CD4-positive, alpha-beta T cell (primary cell): ENCODE measurements at regions of chr18 and their contacts with region 1.

Region 1: DNA sequence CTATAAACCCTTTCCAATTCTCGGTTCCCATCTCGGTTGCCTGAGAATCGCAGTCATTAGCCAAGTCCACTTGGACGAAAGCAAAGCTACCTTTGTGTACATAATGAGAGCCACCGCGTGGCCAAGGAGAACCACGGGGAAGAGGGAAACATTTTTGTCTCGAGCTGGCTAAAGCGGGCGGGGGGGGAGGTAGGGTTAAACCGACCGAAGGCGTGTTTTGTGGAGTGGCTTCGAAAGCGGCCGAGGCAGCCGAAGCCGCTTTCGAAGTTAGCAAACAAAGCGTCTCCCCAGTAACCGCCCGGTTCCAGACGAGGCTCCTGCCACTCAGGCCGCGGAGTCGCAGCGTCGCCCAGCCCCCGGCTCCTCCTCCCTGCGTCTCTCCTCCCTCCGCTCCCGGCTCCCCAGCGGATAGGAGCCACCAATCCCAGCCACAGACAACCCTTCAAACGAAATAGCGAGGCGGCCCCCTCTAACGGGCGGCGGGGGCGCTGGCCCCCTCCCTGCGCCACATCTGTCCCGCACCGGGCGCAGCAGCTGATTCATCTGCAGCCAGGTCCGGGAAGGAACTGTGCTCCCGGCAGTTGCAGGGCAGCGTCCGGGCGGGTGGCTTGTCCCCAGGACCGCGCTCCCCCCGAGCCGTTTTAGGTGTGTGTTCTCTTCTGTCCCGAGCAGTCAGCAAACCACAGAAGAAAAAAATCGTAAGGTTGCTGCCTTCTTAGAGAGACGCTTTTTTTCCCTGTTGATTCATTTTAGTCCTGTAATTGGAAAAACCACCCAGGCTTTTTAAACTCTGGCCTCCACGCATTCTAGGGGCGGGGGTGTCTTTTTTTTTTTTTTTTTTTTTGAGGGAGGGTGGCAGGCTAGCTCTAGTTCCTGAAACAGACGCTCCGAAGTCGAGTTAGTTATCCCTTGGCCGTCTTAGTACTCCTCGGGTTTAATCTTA is 1.8 kb upstream of the TGIF1 start:
- DNase-seq: peak; percentile 74 to 95 (median 84)
- ATAC-seq: peak; percentile 52
- H3K4me3 ChIP-seq: peak overlapping the region; percentile 90
- H3K4me3 Mint-ChIP-seq: peak overlapping the region; percentile 95
- H3K27ac ChIP-seq: peak overlapping the region; percentile 94 to 98
- H3K27ac Mint-ChIP-seq: peak overlapping the region; percentile 99
- H3K4me1 ChIP-seq: peaks cover 48% of the 10 kb centered on the region
- H3K4me1 Mint-ChIP-seq: peaks cover 47% of the 10 kb centered on the region
- H3K27me3 ChIP-seq: no peaks in the 10 kb centered on the region
- H3K27me3 Mint-ChIP-seq: peaks cover 5% of the 10 kb centered on the region
- CTCF ChIP-seq: no peak

Region 2: GRCh38 chr18:2655178-2655953 is 792.8 kb before region 1 on chr18 and contains the start of gene SMCHD1:
- CTCF ChIA-PET with region 1: no interaction called
- POLR2A ChIA-PET with region 1: interaction called, 5 read pairs
- intact Hi-C with region 1: loop called in 1 of 2 experiments (anchors 5 kb)
- DNase-seq: peak; percentile 73 to 96 (median 87)
- ATAC-seq: peak; percentile 67
- H3K4me3 ChIP-seq: peak within 1 kb of the TSS; percentile 97
- H3K4me3 Mint-ChIP-seq: peak within 1 kb of the TSS; percentile 97
- H3K27ac ChIP-seq: peak within 1 kb of the TSS; percentile 99
- H3K27ac Mint-ChIP-seq: peak within 1 kb of the TSS; percentile 89
- H3K4me1 ChIP-seq: peaks cover 25% of the 10 kb centered on the region
- H3K4me1 Mint-ChIP-seq: peaks cover 55% of the 10 kb centered on the region
- H3K27me3 ChIP-seq: no peaks in the 10 kb centered on the region
- H3K27me3 Mint-ChIP-seq: no peaks in the 10 kb centered on the region
- CTCF ChIP-seq: no peak
- total RNA-seq, gene SMCHD1: 357 to 359 TPM

Region 3: DNA sequence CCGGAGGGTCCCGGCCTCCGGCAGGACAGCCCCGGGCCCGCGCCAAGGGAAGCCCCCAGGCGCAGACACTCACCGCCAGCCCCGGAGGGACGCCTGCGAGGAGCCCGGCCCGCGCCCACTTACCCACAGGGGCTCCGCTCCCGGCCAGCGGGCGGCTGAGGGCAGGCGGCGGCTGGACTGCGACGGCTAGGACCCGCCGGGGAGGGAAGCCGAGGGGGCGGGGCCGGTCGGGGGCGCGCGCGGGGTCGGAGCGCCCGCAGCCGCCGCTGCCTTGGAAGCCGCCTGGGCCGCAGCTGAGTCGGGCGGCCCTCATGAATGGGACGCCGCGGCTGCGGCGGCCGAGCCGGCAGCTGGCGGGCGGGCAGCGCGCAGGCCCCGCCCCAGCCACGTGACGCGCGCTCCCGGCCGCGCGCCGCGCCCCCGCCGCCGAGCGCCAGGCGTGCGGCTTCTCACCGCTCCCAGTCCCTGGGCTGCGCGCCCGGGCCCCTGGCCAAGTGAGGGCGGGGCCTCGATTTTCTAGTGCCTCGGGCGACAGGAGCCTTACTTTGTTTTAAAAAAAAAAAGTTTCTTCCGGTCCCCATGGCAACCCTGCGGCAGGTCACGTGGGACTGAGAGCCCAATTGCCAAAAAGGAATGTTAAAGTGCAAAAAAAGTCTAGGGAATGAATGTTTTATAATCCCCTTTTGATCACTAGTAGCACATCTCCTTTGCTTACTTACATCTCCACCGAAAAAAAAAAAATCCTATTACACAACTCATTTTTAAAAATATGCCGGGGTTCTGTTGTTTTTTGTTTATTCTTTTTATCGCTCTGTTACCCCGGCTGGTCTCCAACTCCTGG is 435.0 kb before region 1 on chr18 and contains the start of gene LPIN2:
- CTCF ChIA-PET with region 1: no interaction called
- POLR2A ChIA-PET with region 1: no interaction called
- intact Hi-C with region 1: loop called in 1 of 2 experiments (anchors 5 kb)
- DNase-seq: peak; percentile 93 to 99 (median 96)
- ATAC-seq: peak; percentile 91
- H3K4me3 ChIP-seq: peak within 1 kb of the TSS; percentile 68
- H3K4me3 Mint-ChIP-seq: peak within 1 kb of the TSS; percentile 94
- H3K27ac ChIP-seq: peak within 1 kb of the TSS; percentile 34 to 59
- H3K27ac Mint-ChIP-seq: peak within 1 kb of the TSS; percentile 92
- H3K4me1 ChIP-seq: peaks cover 74% of the 10 kb centered on the region
- H3K4me1 Mint-ChIP-seq: peaks cover 72% of the 10 kb centered on the region
- H3K27me3 ChIP-seq: no peaks in the 10 kb centered on the region
- H3K27me3 Mint-ChIP-seq: no peaks in the 10 kb centered on the region
- CTCF ChIP-seq: no peak
- total RNA-seq, gene LPIN2: 48.7 to 49.0 TPM

Region 4: GRCh38 chr18:3281456-3282400 is 166.4 kb before region 1 on chr18:
- CTCF ChIA-PET with region 1: no interaction called
- POLR2A ChIA-PET with region 1: interaction called, 3 read pairs
- intact Hi-C with region 1: loop called in 1 of 2 experiments (anchors 5 kb)
- DNase-seq: peak in 3 of 14 experiments; percentile 79 to 83 (median 83)
- ATAC-seq: peak; percentile 87
- H3K4me3 ChIP-seq: no peak overlapping the region
- H3K4me3 Mint-ChIP-seq: no peak overlapping the region
- H3K27ac ChIP-seq: no peak overlapping the region
- H3K27ac Mint-ChIP-seq: no peak overlapping the region
- H3K4me1 ChIP-seq: no peaks in the 10 kb centered on the region
- H3K4me1 Mint-ChIP-seq: no peaks in the 10 kb centered on the region
- H3K27me3 ChIP-seq: no peaks in the 10 kb centered on the region
- H3K27me3 Mint-ChIP-seq: no peaks in the 10 kb centered on the region
- CTCF ChIP-seq: peak; percentile 82

Region 5: DNA sequence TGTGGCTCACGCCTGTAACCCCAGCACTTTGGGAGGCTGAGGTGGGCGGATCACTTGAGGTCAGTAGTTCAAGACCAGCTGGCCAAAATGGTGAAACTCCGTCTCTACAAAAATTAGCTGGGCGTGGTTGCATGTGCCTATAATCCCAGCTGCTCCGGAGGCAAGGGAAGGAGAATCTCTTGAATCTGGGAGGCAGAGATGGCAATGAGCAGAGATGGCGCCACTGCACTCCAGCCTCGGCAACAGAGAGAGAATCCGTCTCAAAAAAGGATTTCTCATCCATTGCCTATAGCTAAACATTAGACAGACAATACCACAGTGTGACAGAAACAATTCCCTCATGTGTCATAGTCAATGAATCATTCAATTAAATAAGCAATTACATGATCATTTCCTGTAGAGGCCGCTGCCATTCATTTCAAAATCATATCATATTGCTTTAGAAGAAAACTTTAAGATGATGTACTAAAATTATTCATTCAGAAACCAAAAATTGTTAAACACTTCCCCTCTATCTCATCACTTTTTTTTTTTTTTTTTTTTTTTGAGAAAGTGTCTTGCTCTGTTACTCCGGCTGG is 67.7 kb before region 1 on chr18:
- CTCF ChIA-PET with region 1: interaction called, 4 read pairs
- POLR2A ChIA-PET with region 1: interaction called, 3 read pairs
- intact Hi-C with region 1: loop called in 1 of 2 experiments (anchors 5 kb)
- DNase-seq: peak in 3 of 14 experiments; percentile 52 to 62 (median 54)
- ATAC-seq: peak; percentile 51
- H3K4me3 ChIP-seq: no peak overlapping the region
- H3K4me3 Mint-ChIP-seq: no peak overlapping the region
- H3K27ac ChIP-seq: no peak overlapping the region
- H3K27ac Mint-ChIP-seq: no peak overlapping the region
- H3K4me1 ChIP-seq: no peaks in the 10 kb centered on the region
- H3K4me1 Mint-ChIP-seq: no peaks in the 10 kb centered on the region
- H3K27me3 ChIP-seq: no peaks in the 10 kb centered on the region
- H3K27me3 Mint-ChIP-seq: no peaks in the 10 kb centered on the region
- CTCF ChIP-seq: no peak

Region 6: DNA sequence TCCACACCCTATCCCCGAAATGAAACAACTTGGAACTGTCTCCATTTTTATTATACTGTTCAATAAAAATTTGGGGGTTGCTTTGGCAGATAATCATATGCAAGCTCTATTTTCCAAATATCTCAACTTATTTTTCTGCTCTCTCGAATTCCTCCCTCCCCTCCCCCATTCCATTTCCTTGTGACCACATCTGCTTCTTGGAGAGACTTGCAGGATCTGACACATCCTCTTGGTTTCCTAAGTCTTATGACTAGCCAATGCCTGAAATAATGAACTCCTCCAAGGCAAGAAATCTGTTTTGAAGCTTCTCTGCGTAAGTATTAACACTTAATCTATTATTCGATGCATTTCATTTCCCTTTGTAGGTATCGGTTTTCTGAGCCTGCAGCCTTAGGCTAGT is 17.9 kb after region 1 on chr18:
- CTCF ChIA-PET with region 1: interaction called, 3 read pairs
- POLR2A ChIA-PET with region 1: interaction called, 66 read pairs
- intact Hi-C with region 1: no loop called
- DNase-seq: no peak
- ATAC-seq: no peak
- H3K4me3 ChIP-seq: no peak overlapping the region
- H3K4me3 Mint-ChIP-seq: no peak overlapping the region
- H3K27ac ChIP-seq: peak overlapping the region in 1 of 2 donors; percentile 21
- H3K27ac Mint-ChIP-seq: peak overlapping the region; percentile 16
- H3K4me1 ChIP-seq: peaks cover 11% of the 10 kb centered on the region
- H3K4me1 Mint-ChIP-seq: peaks cover 22% of the 10 kb centered on the region
- H3K27me3 ChIP-seq: no peaks in the 10 kb centered on the region
- H3K27me3 Mint-ChIP-seq: no peaks in the 10 kb centered on the region
- CTCF ChIP-seq: no peak

Region 7: DNA sequence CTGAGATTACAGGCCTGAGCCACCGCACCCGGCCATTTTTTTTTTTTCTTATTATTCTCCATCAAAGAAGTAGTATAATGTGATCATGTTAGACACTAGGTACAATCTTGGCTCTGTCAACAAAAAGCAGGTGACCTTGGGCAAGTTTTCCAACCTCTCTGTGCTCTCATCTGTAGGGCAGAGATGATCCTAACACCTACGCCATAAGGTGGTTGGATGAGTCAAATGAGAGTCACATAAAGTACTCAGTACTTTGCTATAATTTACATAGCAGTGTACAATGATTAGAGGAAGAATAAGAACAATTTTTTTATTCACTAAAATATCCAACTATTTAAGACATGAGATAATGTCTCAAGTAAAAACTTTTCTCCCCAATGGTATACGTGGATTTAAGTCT is 130.5 kb after region 1 on chr18:
- CTCF ChIA-PET with region 1: no interaction called
- POLR2A ChIA-PET with region 1: no interaction called
- intact Hi-C with region 1: no loop called
- DNase-seq: no peak
- ATAC-seq: no peak
- H3K4me3 ChIP-seq: no peak overlapping the region
- H3K4me3 Mint-ChIP-seq: no peak overlapping the region
- H3K27ac ChIP-seq: no peak overlapping the region
- H3K27ac Mint-ChIP-seq: no peak overlapping the region
- H3K4me1 ChIP-seq: no peaks in the 10 kb centered on the region
- H3K4me1 Mint-ChIP-seq: no peaks in the 10 kb centered on the region
- H3K27me3 ChIP-seq: no peaks in the 10 kb centered on the region
- H3K27me3 Mint-ChIP-seq: no peaks in the 10 kb centered on the region
- CTCF ChIP-seq: no peak

Region 8: GRCh38 chr18:3604498-3605408 is 156.6 kb after region 1 on chr18:
- CTCF ChIA-PET with region 1: interaction called, 3 read pairs
- POLR2A ChIA-PET with region 1: interaction called, 26 read pairs
- intact Hi-C with region 1: no loop called
- DNase-seq: peak in 5 of 14 experiments; percentile 9 to 85 (median 72)
- ATAC-seq: peak; percentile 69
- H3K4me3 ChIP-seq: peak overlapping the region; percentile 47
- H3K4me3 Mint-ChIP-seq: no peak overlapping the region
- H3K27ac ChIP-seq: peak overlapping the region; percentile 38 to 58
- H3K27ac Mint-ChIP-seq: no peak overlapping the region
- H3K4me1 ChIP-seq: peaks cover 47% of the 10 kb centered on the region
- H3K4me1 Mint-ChIP-seq: peaks cover 8% of the 10 kb centered on the region
- H3K27me3 ChIP-seq: no peaks in the 10 kb centered on the region
- H3K27me3 Mint-ChIP-seq: no peaks in the 10 kb centered on the region
- CTCF ChIP-seq: no peak